ENCODE measurements at regions of chr12 and their contacts with region 1.

Region 1: GRCh38 chr12:103548622-103549601 is 38.2 kb upstream of the STAB2 start:
- DNase-seq: peak; percentile 62 to 77
- H3K4me3 ChIP-seq: no peak overlapping the region
- H3K4me3 Mint-ChIP-seq: no peak overlapping the region
- H3K27ac Mint-ChIP-seq: no peak overlapping the region
- H3K4me1 ChIP-seq: no peaks in the 10 kb centered on the region
- H3K4me1 Mint-ChIP-seq: no peaks in the 10 kb centered on the region
- H3K27me3 ChIP-seq: no peaks in the 10 kb centered on the region
- H3K27me3 Mint-ChIP-seq: peaks cover 4% of the 10 kb centered on the region
- CTCF ChIP-seq: peak; percentile 76 to 82

Region 2: DNA sequence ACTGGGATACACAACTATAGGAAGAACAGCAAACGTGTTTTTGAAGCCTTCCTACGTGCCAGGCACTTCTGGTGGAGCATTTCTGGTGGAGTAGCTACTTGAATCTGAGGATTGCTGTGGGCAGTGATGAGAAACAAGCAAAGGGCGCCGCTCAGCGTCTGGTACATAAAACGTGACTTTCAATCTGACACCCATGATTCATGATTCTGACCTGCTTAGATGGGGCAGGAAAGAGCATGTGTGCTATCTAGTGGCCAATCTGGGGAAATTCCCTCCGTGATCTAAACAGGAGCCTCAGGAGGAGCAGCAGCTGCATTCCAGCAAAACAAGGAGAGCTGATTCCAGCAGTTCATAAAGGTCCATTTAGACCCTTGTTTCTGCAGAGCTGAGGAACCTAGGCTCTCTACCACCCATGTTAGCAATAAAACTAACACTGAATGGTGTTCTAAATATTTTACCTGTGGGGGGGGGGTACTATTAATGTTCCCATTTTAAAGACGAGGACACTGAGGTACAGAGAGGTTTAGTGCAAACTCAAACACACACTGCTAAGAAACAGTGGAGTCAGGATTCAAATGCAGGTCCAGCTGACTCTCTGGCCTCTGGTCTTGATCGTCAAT is 669.7 kb before region 1 on chr12:
- CTCF ChIA-PET with region 1: no interaction called
- POLR2A ChIA-PET with region 1: no interaction called
- intact Hi-C with region 1: loop called (anchors 1 kb)
- DNase-seq: peak; percentile 51 to 57
- H3K4me3 ChIP-seq: no peak overlapping the region
- H3K4me3 Mint-ChIP-seq: no peak overlapping the region
- H3K27ac Mint-ChIP-seq: no peak overlapping the region
- H3K4me1 ChIP-seq: no peaks in the 10 kb centered on the region
- H3K4me1 Mint-ChIP-seq: no peaks in the 10 kb centered on the region
- H3K27me3 ChIP-seq: no peaks in the 10 kb centered on the region
- H3K27me3 Mint-ChIP-seq: peaks cover 3% of the 10 kb centered on the region
- CTCF ChIP-seq: peak; percentile 40 to 64

Region 3: GRCh38 chr12:102948941-102949352 is 600.0 kb before region 1 on chr12:
- CTCF ChIA-PET with region 1: interaction called, 7 read pairs
- POLR2A ChIA-PET with region 1: no interaction called
- intact Hi-C with region 1: loop called (anchors 1 kb)
- DNase-seq: peak in 1 of 2 experiments; percentile 60
- H3K4me3 ChIP-seq: no peak overlapping the region
- H3K4me3 Mint-ChIP-seq: no peak overlapping the region
- H3K27ac Mint-ChIP-seq: no peak overlapping the region
- H3K4me1 ChIP-seq: no peaks in the 10 kb centered on the region
- H3K4me1 Mint-ChIP-seq: no peaks in the 10 kb centered on the region
- H3K27me3 ChIP-seq: no peaks in the 10 kb centered on the region; the same call in 1 of the 2 replicates
- H3K27me3 Mint-ChIP-seq: peaks cover 5% of the 10 kb centered on the region
- CTCF ChIP-seq: peak; percentile 72 to 88

Region 4: GRCh38 chr12:103326190-103326589 is 222.7 kb before region 1 on chr12:
- CTCF ChIA-PET with region 1: no interaction called
- POLR2A ChIA-PET with region 1: no interaction called
- intact Hi-C with region 1: loop called (anchors 1 kb)
- DNase-seq: no peak
- H3K4me3 ChIP-seq: no peak overlapping the region
- H3K4me3 Mint-ChIP-seq: no peak overlapping the region
- H3K27ac Mint-ChIP-seq: no peak overlapping the region
- H3K4me1 ChIP-seq: no peaks in the 10 kb centered on the region
- H3K4me1 Mint-ChIP-seq: peaks cover 4% of the 10 kb centered on the region
- H3K27me3 ChIP-seq: no peaks in the 10 kb centered on the region
- H3K27me3 Mint-ChIP-seq: no peaks in the 10 kb centered on the region
- CTCF ChIP-seq: peak; percentile 8 to 21

Region 5: GRCh38 chr12:103401421-103401820 is 147.5 kb before region 1 on chr12:
- CTCF ChIA-PET with region 1: no interaction called
- POLR2A ChIA-PET with region 1: no interaction called
- intact Hi-C with region 1: loop called (anchors 1 kb)
- DNase-seq: peak; percentile 14 to 47
- H3K4me3 ChIP-seq: no peak overlapping the region
- H3K4me3 Mint-ChIP-seq: no peak overlapping the region
- H3K27ac Mint-ChIP-seq: no peak overlapping the region
- H3K4me1 ChIP-seq: no peaks in the 10 kb centered on the region
- H3K4me1 Mint-ChIP-seq: no peaks in the 10 kb centered on the region
- H3K27me3 ChIP-seq: no peaks in the 10 kb centered on the region
- H3K27me3 Mint-ChIP-seq: peaks cover 2% of the 10 kb centered on the region
- CTCF ChIP-seq: peak in 1 of 2 experiments; percentile 47

Region 6: DNA sequence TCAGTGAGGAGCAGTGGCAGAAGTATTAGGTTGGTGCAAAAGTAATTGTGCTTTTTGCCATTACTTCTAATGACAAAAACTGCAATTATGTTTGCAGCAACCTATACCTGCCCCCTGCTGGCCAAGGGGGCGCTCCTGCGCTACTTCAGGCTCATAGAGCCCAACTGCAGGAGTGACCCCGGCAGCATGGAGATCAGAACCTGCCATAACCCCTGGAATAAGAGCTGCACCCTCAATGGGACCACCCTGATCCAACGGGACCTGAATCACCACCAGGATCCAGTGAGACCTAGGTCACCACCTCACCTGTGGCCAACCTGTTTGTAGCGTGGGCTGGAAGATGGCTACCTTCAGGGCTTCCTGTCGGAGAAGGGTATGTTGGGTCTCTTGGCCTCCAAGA is 44.9 kb before region 1 on chr12:
- CTCF ChIA-PET with region 1: no interaction called
- POLR2A ChIA-PET with region 1: no interaction called
- intact Hi-C with region 1: loop called (anchors 1 kb)
- DNase-seq: peak in 1 of 2 experiments; percentile 45
- H3K4me3 ChIP-seq: no peak overlapping the region
- H3K4me3 Mint-ChIP-seq: no peak overlapping the region
- H3K27ac Mint-ChIP-seq: no peak overlapping the region
- H3K4me1 ChIP-seq: no peaks in the 10 kb centered on the region
- H3K4me1 Mint-ChIP-seq: peaks cover 5% of the 10 kb centered on the region
- H3K27me3 ChIP-seq: no peaks in the 10 kb centered on the region
- H3K27me3 Mint-ChIP-seq: peaks cover 2% of the 10 kb centered on the region
- CTCF ChIP-seq: peak; percentile 50 to 54

Measured in Caco-2 (cell line).